ENCODE measurements at regions of chr3 and their contacts with region 1.

Region 1: DNA sequence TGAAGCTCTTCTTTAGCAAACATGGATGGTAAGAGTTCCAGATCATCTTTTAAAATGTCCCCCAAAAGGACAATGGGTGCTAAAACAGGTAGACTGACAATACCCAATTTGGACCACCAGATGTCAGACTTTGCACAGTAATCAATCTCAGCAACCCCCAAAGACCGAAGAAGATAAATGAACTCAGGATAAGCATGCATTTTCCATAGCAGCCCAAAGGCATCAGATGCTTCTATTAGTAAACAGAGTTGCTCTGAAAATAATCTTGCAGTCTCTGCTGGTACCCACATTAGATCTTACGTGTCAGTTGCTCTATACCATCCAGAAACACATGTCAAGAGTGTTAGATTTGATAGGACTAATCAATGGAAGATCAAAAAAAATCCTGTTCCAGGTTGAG is 20.6 kb downstream of the MYH15 start:
- DNase-seq: no peak
- ATAC-seq: peak; percentile 67

Region 2: GRCh38 chr3:108180194-108180593 is 309.6 kb before region 1 on chr3:
- intact Hi-C with region 1: no loop called
- DNase-seq: no peak
- ATAC-seq: no peak

Region 3: DNA sequence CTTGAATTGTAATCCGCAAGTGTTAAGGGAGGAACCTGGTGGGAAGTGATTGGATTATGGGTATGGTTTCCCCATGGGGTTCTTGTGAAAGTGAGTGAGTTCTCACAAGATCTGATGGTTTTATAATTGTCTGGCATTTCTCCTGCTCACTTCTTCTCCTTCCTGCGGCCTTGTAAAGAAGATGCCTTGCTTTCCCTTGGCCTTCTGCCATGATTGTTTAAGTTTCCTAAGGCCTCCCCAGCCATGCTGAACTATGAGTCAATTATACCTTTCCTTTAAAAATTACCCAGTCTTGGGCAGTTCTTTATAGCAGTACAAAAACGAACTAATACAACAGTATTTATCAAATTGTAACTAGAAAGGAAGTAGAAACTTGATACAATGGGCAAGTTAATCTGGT is 299.4 kb before region 1 on chr3:
- intact Hi-C with region 1: no loop called
- DNase-seq: no peak
- ATAC-seq: no peak

Region 4: DNA sequence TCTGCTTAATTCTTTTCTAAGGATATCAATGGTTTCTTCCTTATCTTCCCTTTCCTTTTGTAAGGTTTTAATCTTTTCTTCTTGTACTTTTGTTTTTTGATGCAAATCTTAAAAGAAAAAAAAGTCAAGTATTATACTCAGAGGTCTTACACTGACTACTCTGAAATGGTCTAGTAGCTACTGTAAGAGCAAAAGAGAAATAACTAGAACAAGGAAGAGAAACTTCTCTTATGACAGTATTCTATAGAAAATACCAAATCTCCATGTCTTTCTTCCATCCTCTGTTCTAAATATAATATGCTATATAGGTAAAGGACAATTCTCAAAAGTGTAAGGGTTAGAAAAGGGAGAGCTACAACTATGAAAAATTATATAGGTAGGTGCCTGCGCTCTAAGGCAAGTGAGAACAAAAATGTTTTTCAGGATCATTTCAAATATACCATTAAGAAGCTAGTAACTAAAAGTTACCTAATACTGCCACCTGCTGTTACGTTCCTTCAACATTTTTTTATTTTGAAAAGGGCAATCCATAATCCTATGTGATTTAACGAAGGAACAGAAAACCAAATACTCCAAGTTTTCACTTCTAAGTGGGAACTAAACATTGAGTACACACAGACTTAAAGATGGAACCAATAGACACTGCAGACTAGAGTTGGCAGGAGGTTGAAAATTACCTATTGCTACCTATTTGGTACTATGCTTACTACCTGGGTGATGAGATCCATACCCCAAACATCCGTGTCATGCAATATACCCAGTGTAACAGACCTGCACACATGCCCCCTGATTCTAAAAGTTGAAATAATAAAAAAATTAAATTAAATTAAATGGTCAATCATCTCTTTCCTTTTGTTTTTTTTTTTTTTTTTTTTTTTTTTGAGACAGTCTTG is 62.7 kb after region 1 on chr3:
- intact Hi-C with region 1: loop called (anchors 2 kb)
- DNase-seq: no peak
- ATAC-seq: peak; percentile 49